CD8-positive, alpha-beta memory T cell (primary cell): ENCODE measurements at regions of chr20 and their contacts with region 1.

Region 1: GRCh38 chr20:62937366-62938104 is 412 bp upstream of the GID8 start:
- DNase-seq: peak; percentile 95 to 98 (median 97)
- H3K4me3 ChIP-seq: peak overlapping the region; percentile 93
- H3K4me3 Mint-ChIP-seq: peak overlapping the region in 6 of 7 donors; percentile 94 to 98 (median 98)
- H3K27ac ChIP-seq: peak overlapping the region; percentile 87
- H3K27ac Mint-ChIP-seq: peak overlapping the region; percentile 94 to 98 (median 96)
- H3K4me1 ChIP-seq: peaks cover 49% of the 10 kb centered on the region
- H3K4me1 Mint-ChIP-seq: peaks cover 29 to 44% (median 43%) of the 10 kb centered on the region in 3 donors
- H3K27me3 ChIP-seq: no peaks in the 10 kb centered on the region
- H3K27me3 Mint-ChIP-seq: no peaks in the 10 kb centered on the region

Region 2: GRCh38 chr20:62926239-62927104 is 11.1 kb before region 1 on chr20 and contains the start of gene DIDO1:
- CTCF ChIA-PET with region 1: interaction called, 38 read pairs
- POLR2A ChIA-PET with region 1: interaction called, 30 read pairs
- DNase-seq: peak; percentile 84 to 91 (median 88)
- H3K4me3 ChIP-seq: peak within 1 kb of the TSS; percentile 68
- H3K4me3 Mint-ChIP-seq: peak within 1 kb of the TSS; percentile 91 to 98 (median 94)
- H3K27ac ChIP-seq: peak within 1 kb of the TSS; percentile 84
- H3K27ac Mint-ChIP-seq: peak within 1 kb of the TSS; percentile 93 to 99 (median 98)
- H3K4me1 ChIP-seq: peaks cover 64% of the 10 kb centered on the region
- H3K4me1 Mint-ChIP-seq: peaks cover 63 to 79% (median 75%) of the 10 kb centered on the region in 3 donors
- H3K27me3 ChIP-seq: no peaks in the 10 kb centered on the region
- H3K27me3 Mint-ChIP-seq: peaks cover 0 to 1% of the 10 kb centered on the region in 2 donors
- total RNA-seq, gene DIDO1: 55.3 to 57.3 TPM

Region 3: GRCh38 chr20:62961310-62961783 is 23.8 kb after region 1 on chr20:
- CTCF ChIA-PET with region 1: no interaction called
- POLR2A ChIA-PET with region 1: no interaction called
- DNase-seq: no peak
- H3K4me3 ChIP-seq: no peak overlapping the region
- H3K4me3 Mint-ChIP-seq: no peak overlapping the region
- H3K27ac ChIP-seq: no peak overlapping the region
- H3K27ac Mint-ChIP-seq: no peak overlapping the region
- H3K4me1 ChIP-seq: no peaks in the 10 kb centered on the region
- H3K4me1 Mint-ChIP-seq: peaks cover 0 to 6% (median 4%) of the 10 kb centered on the region in 3 donors
- H3K27me3 ChIP-seq: no peaks in the 10 kb centered on the region
- H3K27me3 Mint-ChIP-seq: no peaks in the 10 kb centered on the region

Region 4: DNA sequence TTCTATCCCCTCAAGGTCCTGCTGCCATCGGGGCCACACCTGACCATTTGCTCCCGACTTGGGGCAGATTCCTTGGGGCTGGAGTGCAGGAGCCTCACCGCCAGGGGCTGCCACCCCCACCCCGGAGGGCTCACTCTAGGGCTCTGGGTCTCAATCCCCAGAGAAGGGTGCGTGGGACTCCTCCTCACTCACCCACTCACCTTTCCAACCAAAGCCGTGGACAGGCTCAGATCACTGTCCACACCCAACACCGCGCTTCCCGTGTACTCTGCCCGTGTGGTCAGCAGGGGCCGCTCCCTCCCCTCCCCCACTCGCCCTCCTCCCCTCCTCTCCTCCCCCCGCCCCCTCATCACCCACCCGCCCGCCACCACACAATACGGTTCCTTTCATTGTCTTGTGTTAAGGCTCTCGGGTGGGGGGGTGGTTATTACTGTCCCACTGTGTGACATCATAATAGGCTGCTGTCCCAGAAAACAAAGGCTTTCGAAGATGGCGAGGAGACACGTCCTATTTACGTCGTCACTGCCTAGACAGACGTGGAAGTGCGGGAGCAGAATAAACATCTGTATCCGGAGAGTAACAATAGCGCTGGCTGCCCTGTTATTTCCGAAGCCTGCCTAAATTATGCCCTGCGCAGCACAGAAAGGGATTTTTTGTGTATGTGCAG is 192.6 kb after region 1 on chr20:
- CTCF ChIA-PET with region 1: no interaction called
- POLR2A ChIA-PET with region 1: no interaction called
- DNase-seq: peak in 1 of 5 donors; percentile 23
- H3K4me3 ChIP-seq: no peak overlapping the region
- H3K4me3 Mint-ChIP-seq: no peak overlapping the region
- H3K27ac ChIP-seq: no peak overlapping the region
- H3K27ac Mint-ChIP-seq: no peak overlapping the region
- H3K4me1 ChIP-seq: no peaks in the 10 kb centered on the region
- H3K4me1 Mint-ChIP-seq: no peaks in the 10 kb centered on the region
- H3K27me3 ChIP-seq: no peaks in the 10 kb centered on the region
- H3K27me3 Mint-ChIP-seq: peaks cover 19% of the 10 kb centered on the region in 2 donors